Left ventricle myocardium superior (tissue), 1 donor: ENCODE measurements at regions of chr6 and their contacts with region 1.

Region 1: GRCh38 chr6:82251942-82252341 is 4.4 kb upstream of the IBTK start:
- DNase-seq: no peak
- ATAC-seq: no peak

Region 2: DNA sequence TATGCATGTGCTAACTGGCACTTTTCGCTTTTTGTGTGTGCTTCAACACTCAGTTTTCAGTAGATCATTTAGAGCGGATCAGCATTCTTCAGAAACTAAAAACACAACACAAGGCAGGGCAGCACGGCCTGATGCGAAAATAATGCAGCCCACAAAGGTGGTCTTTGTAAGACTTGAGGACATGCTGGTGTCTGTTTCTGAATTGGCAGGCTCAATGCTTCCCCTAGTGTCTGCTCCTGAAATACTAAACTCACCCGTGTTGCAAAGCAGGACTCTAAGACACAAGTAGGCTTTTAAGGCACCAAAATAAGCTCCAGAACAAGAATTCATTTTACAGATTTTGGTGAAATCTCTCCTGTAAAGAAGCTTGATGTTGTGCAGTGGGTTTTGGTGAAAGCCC is 1176.0 kb before region 1 on chr6:
- intact Hi-C with region 1: loop called (anchors 10 kb)
- DNase-seq: no peak
- ATAC-seq: no peak

Region 3: DNA sequence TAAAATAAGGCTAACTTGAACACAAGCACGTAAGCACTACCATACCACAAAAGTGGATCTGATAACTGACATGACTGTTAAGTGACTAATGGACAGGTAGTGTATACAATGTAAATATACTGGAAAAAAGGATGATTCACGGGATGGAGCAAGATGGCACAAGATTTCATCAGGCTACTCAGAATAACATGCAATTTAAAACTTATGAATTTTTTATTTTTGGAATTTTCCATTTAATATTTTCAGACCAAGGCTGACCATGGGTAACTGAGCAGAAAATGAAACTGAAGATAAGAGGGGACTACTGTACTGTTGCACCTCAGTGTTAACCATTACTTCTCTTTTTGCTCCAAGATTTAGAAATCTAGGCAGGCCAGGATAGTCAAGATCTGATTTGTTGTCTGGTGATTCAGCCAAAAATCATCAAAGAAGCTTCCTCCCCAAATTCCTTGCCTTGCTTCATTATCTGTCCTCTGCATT is 157.1 kb after region 1 on chr6:
- intact Hi-C with region 1: no loop called
- DNase-seq: no peak
- ATAC-seq: no peak

Region 4: GRCh38 chr6:82441066-82441855 is 189.3 kb after region 1 on chr6:
- intact Hi-C with region 1: no loop called
- DNase-seq: no peak
- ATAC-seq: no peak